Esophagus muscularis mucosa (tissue), 4 donors: ENCODE measurements at regions of chrX and their contacts with region 1.

Region 1: DNA sequence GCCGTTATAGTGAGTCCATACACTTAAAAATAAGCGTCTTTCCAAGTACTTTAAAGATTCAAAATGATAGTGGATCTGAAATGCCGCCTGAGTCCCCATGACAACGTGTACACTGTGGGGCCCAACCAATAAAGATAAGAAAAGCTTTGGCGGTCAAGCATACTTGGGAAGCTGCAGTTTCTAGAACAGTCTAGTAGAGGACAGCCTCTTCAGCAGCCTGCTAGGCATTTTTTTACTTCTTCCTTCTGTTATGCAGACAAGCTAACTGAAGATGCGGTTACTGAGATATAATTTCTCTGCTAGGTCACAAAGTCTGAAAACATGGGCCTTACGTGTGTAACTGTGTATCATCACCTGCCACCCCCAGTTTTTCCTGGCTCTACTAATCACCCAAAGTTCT is 402 bp upstream of the UPRT start:
- DNase-seq: no peak
- H3K4me3 ChIP-seq: peak overlapping the region; percentile 64 to 71 (median 66)
- H3K27ac ChIP-seq: peak overlapping the region; percentile 89 to 93 (median 90)
- H3K4me1 ChIP-seq: peaks cover 8 to 36% (median 26%) of the 10 kb centered on the region in 4 donors
- H3K27me3 ChIP-seq: no peaks in the 10 kb centered on the region
- CTCF ChIP-seq: no peak
- EP300 ChIP-seq: no peak
- POLR2A ChIP-seq: no peak

Region 2: GRCh38 chrX:74603040-74603439 is 670.4 kb before region 1 on chrX:
- intact Hi-C with region 1: loop called (anchors 10 kb)
- DNase-seq: no peak
- H3K4me3 ChIP-seq: no peak overlapping the region
- H3K27ac ChIP-seq: no peak overlapping the region
- H3K4me1 ChIP-seq: peaks cover 0 to 18% (median 11%) of the 10 kb centered on the region in 4 donors
- H3K27me3 ChIP-seq: peaks cover 0 to under 1% (median 0%) of the 10 kb centered on the region in 4 donors
- CTCF ChIP-seq: no peak
- EP300 ChIP-seq: no peak
- POLR2A ChIP-seq: no peak

Region 3: GRCh38 chrX:75156021-75156945 is 117.2 kb before region 1 on chrX and contains the start of gene ABCB7:
- intact Hi-C with region 1: loop called (anchors 10 kb)
- DNase-seq: no peak
- H3K4me3 ChIP-seq: peak within 1 kb of the TSS; percentile 62 to 72 (median 67)
- H3K27ac ChIP-seq: peak within 1 kb of the TSS; percentile 78 to 84 (median 82)
- H3K4me1 ChIP-seq: peaks cover 0 to 28% (median 18%) of the 10 kb centered on the region in 4 donors
- H3K27me3 ChIP-seq: no peaks in the 10 kb centered on the region
- CTCF ChIP-seq: peak in 1 of 3 experiments; percentile 25
- EP300 ChIP-seq: no peak
- POLR2A ChIP-seq: no peak
- total RNA-seq, gene ABCB7: 32.3 to 46.9 (median 37.5) TPM

Region 4: GRCh38 chrX:75522565-75523431 is 249.3 kb after region 1 on chrX and contains the start of gene ZDHHC15:
- intact Hi-C with region 1: no loop called
- DNase-seq: peak; percentile 90
- H3K4me3 ChIP-seq: peak within 1 kb of the TSS; percentile 56 to 62 (median 60)
- H3K27ac ChIP-seq: peak within 1 kb of the TSS; percentile 76 to 82 (median 78)
- H3K4me1 ChIP-seq: peaks cover 0 to 34% (median 19%) of the 10 kb centered on the region in 4 donors
- H3K27me3 ChIP-seq: peaks cover 0 to 3% (median 0%) of the 10 kb centered on the region in 4 donors
- CTCF ChIP-seq: no peak
- EP300 ChIP-seq: no peak
- POLR2A ChIP-seq: no peak
- total RNA-seq, gene ZDHHC15: 2.0 to 5.4 (median 3.1) TPM